GM10248 (cell line): ENCODE measurements at regions of chr14 and their contacts with region 1.

Region 1: GRCh38 chr14:58501214-58501816 is 73.8 kb downstream of the KIAA0586 start:
- DNase-seq: peak; percentile 43
- CTCF ChIP-seq: peak; percentile 82

Region 2: GRCh38 chr14:58513272-58513671 is 12.0 kb after region 1 on chr14:
- CTCF ChIA-PET with region 1: interaction called, 26 read pairs
- POLR2A ChIA-PET with region 1: no interaction called
- DNase-seq: no peak
- CTCF ChIP-seq: no peak

Region 3: DNA sequence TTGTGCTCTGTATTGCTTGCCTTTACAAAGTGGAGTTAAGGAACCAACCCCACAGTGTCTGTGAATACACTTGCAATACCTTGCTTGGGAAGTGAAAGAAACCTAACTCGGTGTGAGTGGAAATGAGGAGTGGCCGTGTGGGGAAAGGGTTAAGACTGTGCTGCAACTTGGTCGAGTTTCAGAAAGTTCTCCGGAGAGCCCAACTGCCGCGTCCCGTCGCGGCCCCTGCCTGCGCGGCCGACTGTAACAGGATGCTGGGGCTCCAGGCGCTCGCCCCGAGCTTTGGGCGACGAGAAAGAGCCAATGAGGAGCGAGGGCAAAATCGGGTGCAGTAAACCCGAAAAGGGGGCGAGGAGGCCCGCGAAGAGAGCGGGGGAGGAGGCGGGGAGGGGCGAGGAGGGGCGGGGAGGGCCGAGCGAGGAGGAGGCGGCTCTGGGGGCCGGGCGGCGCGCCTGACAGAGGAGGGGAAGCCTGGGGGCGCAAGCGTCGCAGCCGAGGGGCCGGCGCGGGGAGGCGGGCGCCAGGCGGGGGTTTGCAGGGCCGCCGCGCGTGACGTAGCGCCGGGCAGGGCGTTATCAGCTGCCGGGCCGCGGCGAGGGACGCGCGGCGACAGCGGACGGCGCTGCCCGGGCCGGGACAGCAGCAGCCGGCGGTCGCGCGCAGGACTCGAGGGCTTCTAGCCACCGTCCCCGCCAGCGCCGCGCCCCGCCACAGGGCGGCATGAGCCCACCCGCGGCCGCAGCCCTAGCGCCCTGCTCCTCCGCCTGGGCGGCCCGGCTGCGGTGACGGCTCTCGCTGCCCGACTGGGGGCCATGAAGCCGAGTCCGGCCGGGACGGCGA is 136.3 kb after region 1 on chr14 and contains the start of gene DACT1:
- CTCF ChIA-PET with region 1: interaction called, 14 read pairs
- POLR2A ChIA-PET with region 1: no interaction called
- DNase-seq: peak; percentile 68
- CTCF ChIP-seq: no peak

Region 4: DNA sequence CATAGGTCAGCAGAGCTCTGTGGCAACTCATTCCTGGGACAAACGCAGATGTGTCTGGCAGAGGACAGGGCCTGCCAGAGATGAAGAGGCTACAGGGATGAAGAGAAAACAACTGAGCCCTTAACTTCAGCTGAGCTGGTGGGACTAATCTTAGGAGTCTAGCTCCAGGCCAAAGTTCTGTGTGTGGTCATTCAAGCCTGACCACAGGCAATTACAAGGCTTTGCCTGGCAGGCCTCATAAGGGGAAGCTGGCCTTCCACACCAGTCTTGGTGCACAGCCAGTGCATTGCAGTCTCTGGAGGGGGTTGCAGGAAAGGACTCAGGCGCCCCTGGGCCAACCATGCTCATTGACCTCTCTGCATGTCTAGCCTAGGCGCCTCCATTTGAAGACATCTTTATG is 559.5 kb after region 1 on chr14:
- CTCF ChIA-PET with region 1: interaction called, 15 read pairs
- POLR2A ChIA-PET with region 1: no interaction called
- DNase-seq: no peak
- CTCF ChIP-seq: no peak

Region 5: DNA sequence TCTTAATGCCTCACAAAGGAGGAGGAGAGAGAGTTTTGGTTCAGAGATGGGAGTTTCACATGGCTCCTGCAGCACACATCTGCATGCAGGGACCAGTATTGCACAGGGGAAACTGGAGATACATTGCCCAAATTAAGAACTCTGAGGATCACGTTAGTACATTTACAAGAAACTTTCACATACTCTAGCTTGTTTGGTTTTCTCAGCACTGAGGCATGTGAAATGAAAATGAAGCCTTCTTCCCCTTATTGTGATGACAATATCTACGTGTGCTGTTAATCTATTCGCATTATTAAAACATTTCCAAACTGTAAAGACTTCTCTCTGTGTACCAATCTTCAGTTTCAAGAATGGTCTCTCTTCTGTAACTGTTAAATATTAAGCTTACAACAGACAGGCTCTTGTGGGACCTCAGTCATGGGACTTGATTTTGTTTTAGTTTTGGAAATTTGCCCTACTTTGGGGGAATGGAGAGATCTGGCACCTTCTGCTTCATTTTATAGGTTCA is 811.9 kb after region 1 on chr14:
- CTCF ChIA-PET with region 1: no interaction called
- POLR2A ChIA-PET with region 1: no interaction called
- DNase-seq: no peak
- CTCF ChIP-seq: no peak